ENCODE measurements at regions of chr7 and their contacts with region 1.

Region 1: GRCh38 chr7:45917658-45918057 is 3.4 kb downstream of the IGFBP3 start:
- DNase-seq: peak; percentile 67
- H3K4me3 Mint-ChIP-seq: no peak overlapping the region
- H3K27ac Mint-ChIP-seq: no peak overlapping the region
- H3K4me1 Mint-ChIP-seq: peaks cover 25% of the 10 kb centered on the region
- H3K27me3 Mint-ChIP-seq: no peaks in the 10 kb centered on the region
- CTCF ChIP-seq: peak; percentile 93

Region 2: GRCh38 chr7:45890902-45891461 is 26.7 kb before region 1 on chr7:
- CTCF ChIA-PET with region 1: interaction called, 10 read pairs
- POLR2A ChIA-PET with region 1: interaction called, 3 read pairs
- intact Hi-C with region 1: loop called (anchors 1 kb)
- DNase-seq: peak; percentile 57
- H3K4me3 Mint-ChIP-seq: no peak overlapping the region
- H3K27ac Mint-ChIP-seq: no peak overlapping the region
- H3K4me1 Mint-ChIP-seq: peaks cover 10% of the 10 kb centered on the region
- H3K27me3 Mint-ChIP-seq: peaks cover 12% of the 10 kb centered on the region
- CTCF ChIP-seq: peak; percentile 67

Region 3: GRCh38 chr7:45902820-45903219 is 14.8 kb before region 1 on chr7:
- CTCF ChIA-PET with region 1: interaction called, 13 read pairs
- POLR2A ChIA-PET with region 1: no interaction called
- intact Hi-C with region 1: no loop called
- DNase-seq: no peak
- H3K4me3 Mint-ChIP-seq: no peak overlapping the region
- H3K27ac Mint-ChIP-seq: no peak overlapping the region
- H3K4me1 Mint-ChIP-seq: no peaks in the 10 kb centered on the region
- H3K27me3 Mint-ChIP-seq: no peaks in the 10 kb centered on the region
- CTCF ChIP-seq: no peak

Region 4: GRCh38 chr7:46357290-46357689 is 439.6 kb after region 1 on chr7:
- CTCF ChIA-PET with region 1: interaction called, 191 read pairs
- POLR2A ChIA-PET with region 1: no interaction called
- intact Hi-C with region 1: loop called (anchors 1 kb)
- DNase-seq: no peak
- H3K4me3 Mint-ChIP-seq: no peak overlapping the region
- H3K27ac Mint-ChIP-seq: no peak overlapping the region
- H3K4me1 Mint-ChIP-seq: peaks cover 8% of the 10 kb centered on the region
- H3K27me3 Mint-ChIP-seq: no peaks in the 10 kb centered on the region
- CTCF ChIP-seq: no peak

Region 5: GRCh38 chr7:47088329-47089067 is 1170.8 kb after region 1 on chr7:
- CTCF ChIA-PET with region 1: interaction called, 11 read pairs
- POLR2A ChIA-PET with region 1: no interaction called
- intact Hi-C with region 1: no loop called
- DNase-seq: peak; percentile 64
- H3K4me3 Mint-ChIP-seq: no peak overlapping the region
- H3K27ac Mint-ChIP-seq: peak overlapping the region; percentile 52
- H3K4me1 Mint-ChIP-seq: peaks cover 13% of the 10 kb centered on the region
- H3K27me3 Mint-ChIP-seq: no peaks in the 10 kb centered on the region
- CTCF ChIP-seq: peak; percentile 87

Region 6: DNA sequence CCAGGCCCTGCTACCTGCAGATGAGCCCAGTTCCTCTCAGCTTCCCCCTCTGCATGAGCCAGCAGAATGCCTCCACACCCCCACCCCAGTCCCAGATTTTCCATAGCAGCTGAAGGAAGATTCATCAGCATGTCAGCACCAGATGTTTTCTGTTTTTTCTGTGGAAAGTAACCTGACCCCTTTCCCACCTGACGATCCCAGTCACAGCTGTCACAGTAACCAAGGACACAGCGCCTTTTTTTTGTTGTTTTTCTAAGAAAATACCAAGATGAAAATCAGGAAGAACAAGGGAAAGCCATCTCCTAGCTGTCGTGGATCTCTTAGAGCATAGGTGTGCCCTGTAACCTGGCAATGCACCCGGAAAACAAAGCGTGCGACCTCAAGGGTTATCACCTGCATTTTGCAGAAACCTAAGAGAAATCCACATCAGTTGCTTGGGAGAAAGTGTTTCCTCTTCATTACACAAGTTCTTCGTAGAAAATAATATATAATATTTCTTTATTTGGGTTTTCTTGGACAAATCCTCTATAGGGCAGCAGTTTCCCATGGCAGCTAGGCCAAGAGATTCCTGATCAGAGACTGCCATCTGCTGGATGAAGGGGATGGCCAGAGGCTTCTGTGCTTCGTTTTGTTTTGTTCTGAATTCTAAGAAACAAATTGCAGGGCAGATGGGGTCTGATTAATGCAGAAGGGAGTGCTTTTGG is 1262.3 kb after region 1 on chr7:
- CTCF ChIA-PET with region 1: interaction called, 68 read pairs
- POLR2A ChIA-PET with region 1: no interaction called
- intact Hi-C with region 1: no loop called
- DNase-seq: peak; percentile 76
- H3K4me3 Mint-ChIP-seq: no peak overlapping the region
- H3K27ac Mint-ChIP-seq: no peak overlapping the region
- H3K4me1 Mint-ChIP-seq: no peaks in the 10 kb centered on the region
- H3K27me3 Mint-ChIP-seq: peaks cover 20% of the 10 kb centered on the region
- CTCF ChIP-seq: peak; percentile 85

Region 7: DNA sequence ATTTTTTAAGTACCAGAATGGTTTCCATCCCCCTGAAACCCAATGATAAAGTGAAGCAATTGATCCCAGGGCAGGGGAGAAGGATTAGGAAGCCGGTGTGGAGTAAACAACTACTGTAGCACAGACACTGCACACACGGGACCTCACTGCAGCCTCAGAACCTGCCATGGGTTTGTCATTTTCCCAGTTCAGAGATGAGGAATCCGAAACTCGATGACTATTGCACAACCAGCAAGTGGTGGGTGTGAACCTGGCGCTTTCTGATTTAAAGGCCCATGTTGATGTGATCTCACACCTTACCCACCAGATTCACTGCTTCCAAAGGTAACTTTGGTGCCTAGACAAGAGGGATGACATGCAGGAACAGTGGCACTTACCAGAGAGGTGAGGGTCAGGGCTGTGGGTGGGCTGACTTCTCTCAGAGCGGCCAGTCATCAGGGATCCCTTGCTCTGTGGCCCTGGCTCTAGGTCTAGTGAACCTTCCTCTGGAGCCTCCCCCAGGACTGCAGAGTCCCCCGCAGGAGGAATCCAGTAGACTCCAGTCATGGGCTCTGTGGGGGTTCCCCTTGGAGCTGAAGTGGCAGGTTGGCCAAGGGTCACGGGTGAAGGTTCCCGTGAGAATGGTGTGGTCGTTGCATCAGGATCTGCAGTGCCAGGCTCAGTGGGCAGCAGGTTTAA is 1967.8 kb after region 1 on chr7:
- CTCF ChIA-PET with region 1: no interaction called
- POLR2A ChIA-PET with region 1: no interaction called
- intact Hi-C with region 1: no loop called
- DNase-seq: peak; percentile 50
- H3K4me3 Mint-ChIP-seq: no peak overlapping the region
- H3K27ac Mint-ChIP-seq: no peak overlapping the region
- H3K4me1 Mint-ChIP-seq: no peaks in the 10 kb centered on the region
- H3K27me3 Mint-ChIP-seq: peaks cover 9% of the 10 kb centered on the region
- CTCF ChIP-seq: no peak